ENCODE measurements at regions of chr4 and their contacts with region 1.

Region 1: DNA sequence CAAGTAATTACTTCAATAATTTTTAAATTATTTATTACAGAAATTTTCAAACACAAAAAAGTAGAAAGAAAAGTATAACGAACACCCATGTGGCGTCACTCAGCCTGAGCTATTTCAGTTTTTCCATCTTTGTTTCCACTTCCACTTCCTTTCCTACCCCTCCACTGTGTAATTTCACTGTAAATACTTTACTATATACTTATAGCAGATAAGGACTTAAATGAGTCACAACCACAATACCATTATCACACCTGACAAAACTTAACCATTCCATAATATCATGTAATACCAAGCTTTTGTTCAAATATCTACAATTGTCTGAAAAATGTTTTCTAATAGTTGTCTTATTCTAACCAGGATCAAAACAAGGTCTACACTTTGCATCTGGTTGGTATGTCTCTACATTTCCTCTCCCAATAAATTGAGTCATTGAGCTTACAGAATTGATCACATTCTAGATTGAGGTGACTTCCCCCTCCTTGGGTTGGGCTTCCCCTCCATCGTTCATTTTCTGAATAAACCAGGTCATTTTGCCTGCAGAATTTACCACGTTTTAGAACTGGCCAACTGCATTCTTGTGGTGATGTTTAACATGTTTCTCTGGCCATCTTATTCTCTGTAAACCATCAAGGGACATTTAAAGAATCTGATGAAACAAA is 48.7 kb downstream of the ATP10D start:
- DNase-seq: no peak
- H3K4me3 ChIP-seq: no peak overlapping the region
- H3K27ac ChIP-seq: no peak overlapping the region
- H3K4me1 ChIP-seq: peaks cover 13 to 20% (median 19%) of the 10 kb centered on the region in 4 experiments
- H3K27me3 ChIP-seq: peaks cover 0 to 2% (median 0%) of the 10 kb centered on the region in 5 experiments

Region 2: DNA sequence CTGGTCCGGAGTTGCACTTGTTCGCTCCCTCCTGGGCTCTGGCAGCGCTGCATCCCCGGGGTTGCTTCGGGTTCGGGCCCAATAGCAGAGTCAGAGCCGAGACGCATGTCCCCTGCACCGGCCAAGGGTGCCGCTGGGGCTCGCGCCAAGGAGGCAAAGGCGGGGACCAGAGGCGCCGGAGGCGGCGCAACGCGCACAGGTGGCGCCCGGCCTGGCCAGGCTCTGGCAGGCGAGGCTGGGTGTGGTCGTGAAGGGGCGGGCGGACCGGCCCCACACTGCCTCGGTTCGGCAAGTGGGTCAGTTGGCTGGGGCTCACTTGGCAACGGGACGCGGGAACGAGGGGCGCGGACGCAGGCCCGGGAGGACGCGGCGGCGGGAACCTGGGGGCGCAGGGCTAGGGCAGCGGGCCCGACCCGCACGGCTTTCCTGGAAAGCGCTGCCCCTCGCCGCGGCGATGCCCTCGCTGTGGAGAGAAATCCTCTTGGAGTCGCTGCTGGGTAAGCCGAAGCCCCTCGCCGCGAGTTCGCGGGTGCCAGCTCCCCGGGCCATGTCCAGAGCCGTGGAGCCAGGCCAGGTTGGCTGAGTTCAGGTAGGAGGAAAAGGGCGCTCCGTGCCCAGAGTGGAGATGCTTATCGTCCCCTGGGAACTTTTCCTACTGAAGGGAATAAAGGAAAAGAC is 1452.3 kb after region 1 on chr4 and contains the start of gene CWH43:
- CTCF ChIA-PET with region 1: no interaction called
- POLR2A ChIA-PET with region 1: interaction called, 11 read pairs
- DNase-seq: peak; percentile 4 to 50 (median 47)
- H3K4me3 ChIP-seq: peak within 1 kb of the TSS in 6 of 7 experiments; percentile 8 to 63 (median 46)
- H3K27ac ChIP-seq: no peak within 1 kb of the TSS
- H3K4me1 ChIP-seq: peaks cover 0 to 11% (median 7%) of the 10 kb centered on the region in 4 experiments
- H3K27me3 ChIP-seq: peaks cover 11 to 50% (median 18%) of the 10 kb centered on the region in 5 experiments

Measured in common myeloid progenitor, CD34-positive (primary cell).